Naive thymus-derived CD4-positive, alpha-beta T cell (primary cell): ENCODE measurements at regions of chr22 and their contacts with region 1.

Region 1: GRCh38 chr22:25447686-25448434 is 116.6 kb upstream of the GRK3 start:
- DNase-seq: peak; percentile 71 to 93 (median 88)
- ATAC-seq: peak; percentile 98
- H3K4me3 ChIP-seq: peak overlapping the region; percentile 81
- H3K4me3 Mint-ChIP-seq: peak overlapping the region; percentile 84 to 100 (median 95)
- H3K27ac ChIP-seq: peak overlapping the region; percentile 85
- H3K27ac Mint-ChIP-seq: peak overlapping the region; percentile 90 to 98 (median 95)
- H3K4me1 ChIP-seq: peaks cover 11 to 33% of the 10 kb centered on the region in 2 donors
- H3K4me1 Mint-ChIP-seq: peaks cover 32 to 48% (median 42%) of the 10 kb centered on the region in 7 donors
- H3K27me3 ChIP-seq: no peaks in the 10 kb centered on the region
- H3K27me3 Mint-ChIP-seq: no peaks in the 10 kb centered on the region

Region 2: DNA sequence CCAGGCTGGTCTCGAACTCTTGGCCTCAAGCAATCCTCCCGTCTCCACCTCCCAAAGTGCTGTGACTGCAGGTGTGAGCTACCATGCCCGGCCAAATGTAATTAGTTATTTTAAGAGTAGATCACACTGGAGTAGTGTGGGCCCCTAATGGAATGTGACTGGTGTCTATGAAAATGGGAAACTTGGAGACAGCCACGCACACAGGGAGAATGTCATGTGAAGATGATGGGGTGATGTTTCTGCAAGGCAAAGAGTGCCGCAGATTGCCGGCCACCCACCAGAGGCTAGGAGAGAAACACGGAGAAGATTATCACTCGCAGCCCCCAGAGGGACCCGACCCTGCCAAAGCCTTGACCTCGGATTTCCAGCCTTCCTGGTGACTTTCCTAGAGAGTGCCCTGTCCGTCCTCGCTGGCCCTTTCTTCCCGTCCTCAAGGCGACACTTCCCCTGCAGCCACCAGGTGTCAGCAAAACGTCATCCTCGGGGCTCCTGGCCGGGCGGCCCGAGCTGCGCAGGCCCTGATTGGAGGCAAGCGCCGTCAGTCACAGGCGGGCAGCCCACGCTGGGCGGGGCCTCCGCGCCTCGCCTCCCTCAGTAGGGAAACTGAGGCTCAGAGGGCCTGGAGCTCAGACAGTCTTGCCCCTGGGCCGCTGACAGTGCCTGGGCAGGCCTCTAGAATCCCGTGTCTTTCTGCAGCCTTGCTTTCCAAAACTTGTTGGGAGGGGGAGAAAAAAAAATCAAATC is 212.1 kb before region 1 on chr22:
- CTCF ChIA-PET with region 1: no interaction called
- POLR2A ChIA-PET with region 1: no interaction called
- intact Hi-C with region 1: loop called in 1 of 2 experiments (anchors 5 kb)
- DNase-seq: peak; percentile 16 to 76 (median 53)
- ATAC-seq: peak; percentile 72
- H3K4me3 ChIP-seq: no peak overlapping the region
- H3K4me3 Mint-ChIP-seq: peak overlapping the region in 7 of 10 donors; percentile 27 to 59 (median 48)
- H3K27ac ChIP-seq: no peak overlapping the region
- H3K27ac Mint-ChIP-seq: no peak overlapping the region
- H3K4me1 ChIP-seq: no peaks in the 10 kb centered on the region
- H3K4me1 Mint-ChIP-seq: peaks cover 0 to 8% (median 5%) of the 10 kb centered on the region in 7 donors
- H3K27me3 ChIP-seq: no peaks in the 10 kb centered on the region
- H3K27me3 Mint-ChIP-seq: peaks cover 43 to 59% (median 53%) of the 10 kb centered on the region in 5 donors

Region 3: DNA sequence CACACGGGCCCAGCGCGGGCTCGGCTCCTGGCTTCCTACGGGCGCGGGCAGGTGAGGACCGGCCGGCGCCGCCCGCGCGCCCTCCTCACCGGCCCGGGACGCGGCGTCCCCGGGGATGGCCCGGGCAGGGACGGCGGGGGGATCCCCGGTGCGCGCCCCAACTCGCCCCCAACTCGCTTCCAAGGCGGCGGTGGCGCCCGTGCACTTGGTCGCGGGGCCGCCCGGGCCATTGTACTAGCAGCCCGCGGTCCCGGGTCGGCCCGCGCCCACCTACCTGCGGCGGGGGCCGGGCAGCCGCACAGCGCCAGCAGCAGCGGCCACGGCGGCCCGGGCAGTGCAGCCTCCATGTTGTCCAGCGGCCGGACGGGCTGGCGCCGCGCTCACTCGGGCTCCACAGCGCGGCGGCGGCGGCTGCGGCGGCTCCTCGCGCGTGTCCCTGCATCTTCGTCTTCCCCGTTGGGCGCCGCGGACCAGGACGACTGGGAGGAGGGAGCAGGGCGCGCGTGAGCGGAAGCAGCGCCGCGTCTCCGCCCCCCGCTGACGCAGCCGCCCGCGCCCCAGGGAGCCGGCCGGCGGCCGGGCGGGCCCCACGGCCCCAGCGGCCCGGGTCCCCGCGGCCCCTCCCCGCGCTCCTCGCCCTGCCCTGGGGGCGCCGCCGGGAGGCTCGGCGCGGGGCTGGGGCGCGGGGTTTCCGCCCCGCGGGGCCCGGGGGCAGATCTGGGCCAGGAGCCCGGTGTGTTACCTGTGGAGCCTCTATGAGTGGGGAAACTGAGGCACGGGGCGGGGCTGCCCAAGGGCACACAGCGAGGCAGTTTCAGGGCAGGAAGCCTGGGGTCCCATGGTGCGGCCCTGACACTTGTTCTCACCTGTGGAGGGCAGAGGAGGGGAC is 42.7 kb before region 1 on chr22:
- CTCF ChIA-PET with region 1: no interaction called
- POLR2A ChIA-PET with region 1: no interaction called
- intact Hi-C with region 1: loop called (anchors 1 to 2 kb)
- DNase-seq: peak; percentile 44 to 82 (median 56)
- ATAC-seq: peak; percentile 83
- H3K4me3 ChIP-seq: peak overlapping the region; percentile 54
- H3K4me3 Mint-ChIP-seq: peak overlapping the region; percentile 66 to 92 (median 80)
- H3K27ac ChIP-seq: peak overlapping the region; percentile 83
- H3K27ac Mint-ChIP-seq: peak overlapping the region; percentile 51 to 87 (median 77)
- H3K4me1 ChIP-seq: peaks cover 6 to 17% of the 10 kb centered on the region in 2 donors
- H3K4me1 Mint-ChIP-seq: peaks cover 24 to 40% (median 37%) of the 10 kb centered on the region in 7 donors
- H3K27me3 ChIP-seq: no peaks in the 10 kb centered on the region
- H3K27me3 Mint-ChIP-seq: no peaks in the 10 kb centered on the region

Region 4: GRCh38 chr22:25702040-25702439 is 254.2 kb after region 1 on chr22:
- CTCF ChIA-PET with region 1: interaction called, 3 read pairs
- POLR2A ChIA-PET with region 1: no interaction called
- intact Hi-C with region 1: loop called (anchors 1 to 5 kb)
- DNase-seq: peak in 1 of 9 donors; percentile 18
- ATAC-seq: no peak
- H3K4me3 ChIP-seq: no peak overlapping the region
- H3K4me3 Mint-ChIP-seq: peak overlapping the region in 1 of 10 donors; percentile 79
- H3K27ac ChIP-seq: no peak overlapping the region
- H3K27ac Mint-ChIP-seq: peak overlapping the region in 1 of 9 donors; percentile 94
- H3K4me1 ChIP-seq: no peaks in the 10 kb centered on the region
- H3K4me1 Mint-ChIP-seq: peaks cover 0 to 64% (median 0%) of the 10 kb centered on the region in 7 donors
- H3K27me3 ChIP-seq: no peaks in the 10 kb centered on the region
- H3K27me3 Mint-ChIP-seq: no peaks in the 10 kb centered on the region

Region 5: DNA sequence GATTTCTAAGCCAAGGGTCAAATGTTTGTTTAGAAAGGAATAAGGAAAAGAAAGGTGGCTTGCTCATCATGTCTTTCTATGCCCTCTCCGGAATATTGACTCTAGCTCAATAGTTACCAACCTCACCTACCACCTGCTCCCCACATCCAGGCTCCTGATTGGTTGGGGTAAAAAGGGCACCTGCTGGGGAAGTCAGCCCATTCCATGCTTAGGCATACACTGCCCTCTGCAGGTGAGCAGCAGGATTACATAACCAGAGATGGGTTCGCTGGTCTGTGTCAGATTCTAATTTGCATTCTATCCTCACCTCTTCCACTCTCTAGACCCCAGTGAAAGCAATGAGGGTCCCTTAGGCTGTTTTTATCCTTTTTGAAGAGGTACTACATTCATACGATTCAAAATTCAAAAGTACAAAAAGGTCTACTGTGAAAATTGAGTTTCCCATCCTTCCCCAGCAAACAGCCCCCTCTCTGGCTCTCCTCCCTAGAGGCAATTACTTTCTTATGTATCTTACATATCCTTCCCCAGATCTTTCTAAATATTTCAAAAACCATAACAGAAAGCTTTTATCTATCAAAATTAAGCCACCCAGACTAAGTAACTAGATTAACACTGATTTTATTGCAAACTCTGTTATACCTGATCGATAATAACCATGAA is 883.2 kb after region 1 on chr22:
- CTCF ChIA-PET with region 1: interaction called, 5 read pairs
- POLR2A ChIA-PET with region 1: no interaction called
- intact Hi-C with region 1: loop called (anchors 1 to 10 kb)
- DNase-seq: peak; percentile 19 to 66 (median 54)
- ATAC-seq: peak; percentile 87
- H3K4me3 ChIP-seq: no peak overlapping the region
- H3K4me3 Mint-ChIP-seq: no peak overlapping the region
- H3K27ac ChIP-seq: no peak overlapping the region
- H3K27ac Mint-ChIP-seq: no peak overlapping the region
- H3K4me1 ChIP-seq: no peaks in the 10 kb centered on the region
- H3K4me1 Mint-ChIP-seq: peaks cover 0 to 5% (median 0%) of the 10 kb centered on the region in 7 donors
- H3K27me3 ChIP-seq: no peaks in the 10 kb centered on the region
- H3K27me3 Mint-ChIP-seq: peaks cover 10 to 22% (median 16%) of the 10 kb centered on the region in 5 donors